A549 (cell line): ENCODE measurements at regions of chr15 and their contacts with region 1.

Region 1: DNA sequence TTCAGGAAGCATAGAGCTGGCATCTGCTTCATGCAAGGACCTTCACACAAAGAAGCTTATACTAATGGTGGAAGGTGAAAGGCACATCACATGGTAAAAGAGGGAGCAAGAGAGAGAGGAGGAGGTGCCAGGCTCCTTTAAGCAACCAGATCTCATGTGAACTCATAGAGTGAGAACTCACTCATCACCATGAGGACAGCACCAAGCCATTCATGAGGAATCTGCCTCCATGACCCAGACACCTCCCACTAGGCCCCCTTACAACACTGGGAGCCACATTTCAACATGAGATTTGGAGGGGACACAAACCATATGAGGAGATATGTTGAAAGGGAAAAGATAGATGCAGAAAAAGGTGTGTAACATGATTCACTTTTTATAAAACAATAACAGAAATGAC is 48.4 kb upstream of the TLE3 start:
- DNase-seq: no peak
- ATAC-seq: no peak
- H3K4me3 ChIP-seq: no peak overlapping the region
- H3K27ac ChIP-seq: no peak overlapping the region
- H3K4me1 ChIP-seq: peaks cover 28% of the 10 kb centered on the region; the same call in 2 of the 3 replicates
- CTCF ChIP-seq: no peak
- EP300 ChIP-seq: no peak
- POLR2A ChIP-seq: no peak
- RAD21 ChIP-seq: no peak

Region 2: GRCh38 chr15:70111203-70112073 is 34.7 kb before region 1 on chr15:
- CTCF ChIA-PET with region 1: no interaction called
- POLR2A ChIA-PET with region 1: no interaction called
- DNase-seq: peak; percentile 72 to 75
- ATAC-seq: peak; percentile 68 to 91
- H3K4me3 ChIP-seq: no peak overlapping the region
- H3K27ac ChIP-seq: peak overlapping the region; percentile 64 to 79; a peak in 5 of 6 replicates
- H3K4me1 ChIP-seq: peaks cover 8% of the 10 kb centered on the region
- CTCF ChIP-seq: no peak
- EP300 ChIP-seq: no peak
- POLR2A ChIP-seq: no peak
- RAD21 ChIP-seq: 0 out of 5 replicates have a peak, but pooled peaks of 1 of the 2 experiments have one; percentile 19

Region 3: GRCh38 chr15:70156671-70157271 is 10.6 kb after region 1 on chr15:
- CTCF ChIA-PET with region 1: interaction called, 15 read pairs
- POLR2A ChIA-PET with region 1: no interaction called
- DNase-seq: no peak
- ATAC-seq: no peak
- H3K4me3 ChIP-seq: no peak overlapping the region
- H3K27ac ChIP-seq: no peak overlapping the region
- H3K4me1 ChIP-seq: peaks cover 6% of the 10 kb centered on the region; the same call in 2 of the 3 replicates
- CTCF ChIP-seq: no peak
- EP300 ChIP-seq: no peak
- POLR2A ChIP-seq: no peak
- RAD21 ChIP-seq: no peak

Region 4: GRCh38 chr15:70299931-70300869 is 154.0 kb after region 1 on chr15:
- CTCF ChIA-PET with region 1: no interaction called
- POLR2A ChIA-PET with region 1: no interaction called
- DNase-seq: no peak
- ATAC-seq: no peak
- H3K4me3 ChIP-seq: no peak overlapping the region
- H3K27ac ChIP-seq: no peak overlapping the region
- H3K4me1 ChIP-seq: no peaks in the 10 kb centered on the region
- CTCF ChIP-seq: no peak
- EP300 ChIP-seq: no peak
- POLR2A ChIP-seq: no peak
- RAD21 ChIP-seq: no peak